BJ (cell line): ENCODE measurements at regions of chr2 and their contacts with region 1.

Region 1: GRCh38 chr2:190838492-190838910 is 42.1 kb upstream of the GLS start:
- DNase-seq: no peak
- H3K4me3 ChIP-seq: no peak overlapping the region
- H3K27me3 ChIP-seq: no peaks in the 10 kb centered on the region
- CTCF ChIP-seq: no peak

Region 2: DNA sequence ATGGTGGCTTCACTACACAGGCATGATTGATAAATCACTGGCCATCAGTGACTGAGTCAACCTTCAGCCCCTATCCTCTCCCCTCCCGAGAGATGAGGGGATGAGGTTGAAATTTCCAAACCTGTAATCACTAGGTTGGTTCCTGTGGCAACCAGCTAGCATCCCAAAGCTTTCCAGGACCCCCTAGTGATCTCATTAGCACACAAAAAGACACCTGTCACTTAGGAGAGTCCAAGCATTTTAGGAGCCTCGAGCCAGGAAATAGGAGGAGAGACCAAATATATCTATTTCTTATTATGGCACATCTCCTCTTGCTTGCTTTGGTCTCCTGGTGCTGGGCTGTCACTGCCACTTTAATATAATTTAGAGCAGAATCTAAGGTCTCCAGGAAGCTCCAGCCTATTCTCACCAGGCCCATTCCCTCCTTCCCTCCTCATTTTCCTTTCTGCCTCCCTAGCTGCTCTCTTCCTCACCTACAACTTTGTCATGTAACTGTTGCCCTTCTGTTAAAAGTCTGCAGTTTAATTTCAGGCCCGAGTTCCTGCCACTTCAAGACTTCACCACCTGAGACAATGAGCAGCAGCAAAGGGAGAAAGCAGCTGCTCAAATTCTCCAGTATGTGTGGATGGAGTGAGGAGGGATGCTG is 222.8 kb before region 1 on chr2:
- CTCF ChIA-PET with region 1: no interaction called
- POLR2A ChIA-PET with region 1: no interaction called
- DNase-seq: no peak
- H3K4me3 ChIP-seq: no peak overlapping the region
- H3K27me3 ChIP-seq: no peaks in the 10 kb centered on the region
- CTCF ChIP-seq: no peak

Region 3: GRCh38 chr2:190781604-190782198 is 56.8 kb before region 1 on chr2:
- CTCF ChIA-PET with region 1: no interaction called
- POLR2A ChIA-PET with region 1: no interaction called
- DNase-seq: no peak
- H3K4me3 ChIP-seq: no peak overlapping the region
- H3K27me3 ChIP-seq: peaks cover 2% of the 10 kb centered on the region; the same call in 1 of the 2 replicates
- CTCF ChIP-seq: peak; percentile 57

Region 4: DNA sequence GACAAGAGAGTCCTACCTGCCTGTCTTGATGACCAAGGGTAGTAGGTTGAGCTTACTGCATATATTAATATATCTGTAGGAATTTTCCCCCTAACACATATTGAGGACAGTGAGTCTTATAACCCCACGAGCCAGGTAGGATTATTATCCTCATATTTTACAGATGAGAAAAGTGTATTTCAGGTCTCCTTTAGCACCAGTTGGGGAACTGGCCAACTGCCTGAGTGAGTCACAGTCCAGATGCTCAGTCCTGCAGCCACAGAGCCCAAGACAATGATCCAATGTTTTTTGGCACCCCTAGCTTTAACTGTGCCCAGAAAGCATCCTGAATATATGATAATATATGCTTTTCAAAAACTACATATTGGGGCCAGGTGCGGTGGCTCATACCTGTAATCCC is 11.3 kb after region 1 on chr2:
- CTCF ChIA-PET with region 1: interaction called, 18 read pairs
- POLR2A ChIA-PET with region 1: no interaction called
- DNase-seq: no peak
- H3K4me3 ChIP-seq: no peak overlapping the region
- H3K27me3 ChIP-seq: no peaks in the 10 kb centered on the region
- CTCF ChIP-seq: no peak

Region 5: DNA sequence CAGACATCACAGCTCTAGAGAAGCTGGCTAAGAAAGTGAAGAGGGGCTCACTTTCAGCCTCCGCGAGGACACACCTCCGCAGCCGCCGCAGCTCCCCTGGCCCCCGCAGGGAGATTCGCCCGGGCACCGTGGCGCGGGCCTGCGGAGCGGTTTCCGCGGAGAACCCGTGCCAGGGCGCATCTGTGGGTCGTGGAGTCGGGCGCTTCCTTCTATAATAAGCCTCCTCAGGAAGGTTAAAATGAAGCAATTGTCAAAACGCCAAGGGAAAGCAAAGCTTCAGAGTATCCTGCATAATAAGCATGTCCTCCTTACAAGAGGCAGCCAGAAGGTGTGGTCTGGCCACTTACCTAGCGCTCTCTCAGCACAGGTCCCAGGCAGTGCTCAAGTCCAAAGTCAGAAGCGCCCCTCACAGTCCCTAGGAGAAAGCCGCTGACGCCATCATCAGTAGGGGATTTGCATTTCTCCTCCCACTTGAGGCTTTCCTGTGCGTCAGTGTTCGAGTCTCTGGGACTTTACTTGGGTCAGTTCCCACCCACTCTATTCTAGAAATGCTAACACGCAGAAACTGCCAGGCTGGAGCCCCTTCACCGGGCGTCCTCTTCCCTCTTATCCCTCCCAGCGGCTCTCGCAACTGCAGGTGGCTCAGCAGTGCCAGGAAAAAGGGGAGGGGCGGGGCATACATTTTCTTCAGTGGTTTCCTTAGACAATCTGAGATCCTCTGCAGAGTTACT is 312.3 kb after region 1 on chr2 and contains the start of gene STAT4:
- CTCF ChIA-PET with region 1: no interaction called
- POLR2A ChIA-PET with region 1: no interaction called
- DNase-seq: no peak
- H3K4me3 ChIP-seq: peak within 1 kb of the TSS; percentile 31
- H3K27me3 ChIP-seq: no peaks in the 10 kb centered on the region
- CTCF ChIP-seq: no peak
- polyA plus RNA-seq, gene STAT4: 1.3 and 1.5 TPM in 2 replicates